ENCODE measurements at regions of chr2 and their contacts with region 1.

Region 1: GRCh38 chr2:190679813-190680591 is 31.1 kb downstream of the NAB1 start:
- DNase-seq: peak; percentile 27
- H3K4me3 Mint-ChIP-seq: peak overlapping the region; percentile 69
- H3K27ac Mint-ChIP-seq: peak overlapping the region; percentile 87
- H3K4me1 Mint-ChIP-seq: peaks cover 53% of the 10 kb centered on the region
- H3K27me3 Mint-ChIP-seq: no peaks in the 10 kb centered on the region

Region 2: DNA sequence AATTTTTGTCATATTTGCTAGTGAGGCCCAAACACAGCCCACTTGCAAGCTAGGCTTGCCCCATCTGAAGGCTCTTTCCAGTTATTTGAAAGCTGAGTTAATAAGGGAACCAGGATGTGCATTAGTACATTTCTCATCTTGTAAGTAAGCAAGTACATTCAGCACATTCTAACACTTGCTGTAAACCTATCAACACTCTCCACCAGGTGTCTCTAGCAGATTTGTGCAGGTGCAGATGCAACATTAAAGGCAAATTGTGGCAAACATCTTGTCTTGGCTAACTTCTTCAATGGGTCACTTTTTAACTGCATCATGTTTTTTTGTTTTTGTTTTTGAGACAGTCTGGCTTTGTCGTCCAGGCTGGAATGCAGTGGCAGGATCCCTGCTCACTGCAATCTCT is 297.2 kb before region 1 on chr2:
- intact Hi-C with region 1: loop called (anchors 1 kb)
- DNase-seq: peak; percentile 32
- H3K4me3 Mint-ChIP-seq: no peak overlapping the region
- H3K27ac Mint-ChIP-seq: no peak overlapping the region
- H3K4me1 Mint-ChIP-seq: peaks cover 9% of the 10 kb centered on the region
- H3K27me3 Mint-ChIP-seq: peaks cover 2% of the 10 kb centered on the region

Region 3: GRCh38 chr2:190540048-190540447 is 140.0 kb before region 1 on chr2:
- intact Hi-C with region 1: no loop called
- DNase-seq: no peak
- H3K4me3 Mint-ChIP-seq: no peak overlapping the region
- H3K27ac Mint-ChIP-seq: no peak overlapping the region
- H3K4me1 Mint-ChIP-seq: peaks cover 15% of the 10 kb centered on the region
- H3K27me3 Mint-ChIP-seq: no peaks in the 10 kb centered on the region

Region 4: GRCh38 chr2:190648289-190649034 is 31.5 kb before region 1 on chr2:
- intact Hi-C with region 1: loop called (anchors 1 kb)
- DNase-seq: peak; percentile 84
- H3K4me3 Mint-ChIP-seq: peak overlapping the region; percentile 78
- H3K27ac Mint-ChIP-seq: peak overlapping the region; percentile 82
- H3K4me1 Mint-ChIP-seq: peaks cover 48% of the 10 kb centered on the region
- H3K27me3 Mint-ChIP-seq: no peaks in the 10 kb centered on the region

Region 5: GRCh38 chr2:190695739-190696138 is 15.7 kb after region 1 on chr2:
- intact Hi-C with region 1: loop called (anchors 1 kb)
- DNase-seq: no peak
- H3K4me3 Mint-ChIP-seq: no peak overlapping the region
- H3K27ac Mint-ChIP-seq: peak overlapping the region; percentile 70
- H3K4me1 Mint-ChIP-seq: peaks cover 30% of the 10 kb centered on the region
- H3K27me3 Mint-ChIP-seq: no peaks in the 10 kb centered on the region

Region 6: DNA sequence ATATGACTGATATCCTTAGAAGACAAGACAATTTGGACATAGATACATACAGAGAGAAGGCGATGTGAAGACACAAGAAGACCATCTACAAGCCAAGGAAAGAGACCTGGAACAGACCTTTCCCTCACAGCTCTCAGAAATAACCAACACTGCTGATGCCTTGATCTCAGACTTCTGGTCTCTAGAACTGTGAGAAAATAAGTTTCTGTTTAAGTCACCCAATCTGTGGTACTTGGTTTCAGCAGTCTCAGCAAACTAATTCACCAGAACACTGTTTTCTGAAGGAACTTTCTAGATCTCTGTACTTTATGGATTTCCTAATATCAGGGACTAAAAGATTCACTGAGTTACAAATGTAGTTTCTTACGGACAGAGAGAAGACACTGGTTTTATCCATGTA is 27.7 kb after region 1 on chr2:
- intact Hi-C with region 1: no loop called
- DNase-seq: no peak
- H3K4me3 Mint-ChIP-seq: no peak overlapping the region
- H3K27ac Mint-ChIP-seq: peak overlapping the region; percentile 40
- H3K4me1 Mint-ChIP-seq: peaks cover 19% of the 10 kb centered on the region
- H3K27me3 Mint-ChIP-seq: no peaks in the 10 kb centered on the region

Region 7: GRCh38 chr2:190843874-190844699 is 164.1 kb after region 1 on chr2:
- intact Hi-C with region 1: loop called (anchors 1 kb)
- DNase-seq: peak; percentile 17
- H3K4me3 Mint-ChIP-seq: peak overlapping the region; percentile 44
- H3K27ac Mint-ChIP-seq: peak overlapping the region; percentile 96
- H3K4me1 Mint-ChIP-seq: peaks cover 15% of the 10 kb centered on the region
- H3K27me3 Mint-ChIP-seq: no peaks in the 10 kb centered on the region